BJ (cell line): ENCODE measurements at regions of chr15 and their contacts with region 1.

Region 1: DNA sequence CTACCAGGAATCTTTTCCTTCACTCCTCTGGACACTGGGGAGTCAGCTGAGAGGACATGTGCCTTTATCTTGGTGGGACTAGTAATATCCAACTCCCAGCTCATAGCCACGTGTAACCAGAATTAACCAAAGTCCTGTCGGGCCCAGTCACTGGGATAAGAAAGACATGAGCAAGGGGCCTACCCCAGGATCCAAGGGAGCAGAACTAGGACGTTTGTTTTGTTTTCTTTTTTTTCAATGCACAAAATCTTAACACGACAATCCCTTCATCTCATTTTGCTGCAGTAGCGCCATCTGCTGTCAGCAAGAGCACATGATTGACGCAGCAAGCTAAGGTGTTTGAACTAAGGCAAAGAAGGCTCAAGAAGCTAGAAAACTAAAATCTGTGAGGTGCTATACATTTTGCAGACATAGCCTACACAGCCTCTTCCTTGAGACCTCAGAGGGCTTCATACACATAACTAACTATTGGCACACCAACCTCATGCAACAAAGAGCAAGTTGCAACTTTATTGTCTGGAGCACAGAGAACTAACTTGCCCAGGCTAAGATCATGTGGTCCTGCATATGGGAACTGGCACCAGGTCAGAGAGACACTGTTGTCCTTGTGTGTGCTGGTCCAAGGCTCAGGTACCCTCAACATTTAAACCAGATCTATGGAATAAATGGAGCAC is 43.6 kb downstream of the RLBP1 start:
- DNase-seq: peak; percentile 21
- H3K4me3 ChIP-seq: no peak overlapping the region
- H3K27me3 ChIP-seq: no peaks in the 10 kb centered on the region
- CTCF ChIP-seq: peak; percentile 86

Region 2: GRCh38 chr15:88258093-88258641 is 919.6 kb before region 1 on chr15:
- CTCF ChIA-PET with region 1: no interaction called
- POLR2A ChIA-PET with region 1: no interaction called
- DNase-seq: no peak
- H3K4me3 ChIP-seq: no peak overlapping the region
- H3K27me3 ChIP-seq: peaks cover 42% of the 10 kb centered on the region
- CTCF ChIP-seq: peak; percentile 2; the same call in 1 of the 2 replicates

Region 3: DNA sequence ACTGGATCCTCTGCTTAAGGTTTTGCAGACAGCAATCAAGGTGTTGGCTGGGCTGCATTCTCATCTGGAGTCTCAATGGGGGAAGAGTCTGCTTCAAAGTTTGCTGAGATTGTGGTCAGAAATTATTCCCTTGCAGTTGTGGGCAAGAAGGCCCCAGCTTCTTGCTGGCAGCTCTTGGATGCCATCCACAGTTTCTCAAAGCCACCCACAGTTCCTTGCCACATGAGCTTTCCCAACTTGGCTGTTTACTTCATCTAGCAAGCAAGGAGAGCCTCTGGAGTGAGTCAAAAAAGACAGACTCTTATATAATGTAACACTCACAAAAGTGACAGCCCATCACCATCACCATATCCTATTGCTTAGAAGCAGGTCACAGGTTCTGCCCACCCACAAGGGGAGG is 151.6 kb before region 1 on chr15:
- CTCF ChIA-PET with region 1: interaction called, 12 read pairs
- POLR2A ChIA-PET with region 1: no interaction called
- DNase-seq: no peak
- H3K4me3 ChIP-seq: no peak overlapping the region
- H3K27me3 ChIP-seq: no peaks in the 10 kb centered on the region
- CTCF ChIP-seq: no peak

Region 4: GRCh38 chr15:89068325-89068784 is 109.4 kb before region 1 on chr15:
- CTCF ChIA-PET with region 1: interaction called, 306 read pairs
- POLR2A ChIA-PET with region 1: interaction called, 7 read pairs
- DNase-seq: peak; percentile 79
- H3K4me3 ChIP-seq: no peak overlapping the region
- H3K27me3 ChIP-seq: no peaks in the 10 kb centered on the region
- CTCF ChIP-seq: no peak

Region 5: DNA sequence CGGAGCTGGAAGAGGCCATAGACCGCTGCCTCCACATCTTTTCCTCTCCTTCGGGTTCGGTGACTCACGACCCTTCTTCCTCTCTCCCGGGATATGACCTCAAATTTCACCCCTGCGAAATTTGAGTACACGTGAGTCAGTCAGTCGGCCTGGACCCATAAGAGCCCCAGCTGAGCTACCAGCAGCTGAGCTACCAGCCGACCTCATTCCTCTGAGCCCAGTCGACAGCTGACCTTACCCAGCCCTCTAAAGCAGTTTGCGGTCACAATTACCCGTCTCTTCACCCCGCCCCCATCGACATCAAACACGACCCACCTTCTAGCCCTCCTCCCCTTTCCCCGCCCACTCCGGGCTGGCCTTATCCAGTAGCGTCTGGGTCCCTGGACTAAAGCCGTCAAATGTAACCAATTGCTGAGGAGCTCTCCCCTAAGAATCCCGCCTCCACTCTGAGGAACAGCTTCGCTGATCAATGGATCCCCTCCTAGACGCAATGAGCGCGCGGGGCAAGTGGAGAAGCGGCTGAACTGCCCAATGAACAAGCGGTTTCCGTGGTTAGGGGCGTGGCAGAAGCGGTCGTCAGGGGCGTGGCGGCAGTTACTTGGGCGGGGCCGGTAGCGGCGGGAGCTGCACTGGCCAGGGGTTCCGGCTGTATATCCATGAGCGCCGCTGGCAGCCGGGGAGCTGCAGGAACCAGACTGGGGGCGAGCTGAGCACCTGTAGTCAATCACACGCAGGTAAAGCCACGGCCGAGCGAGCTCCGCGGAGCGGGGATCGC is 89.8 kb before region 1 on chr15 and contains the start of gene ABHD2:
- CTCF ChIA-PET with region 1: interaction called, 10 read pairs
- POLR2A ChIA-PET with region 1: no interaction called
- DNase-seq: peak; percentile 100
- H3K4me3 ChIP-seq: peak within 1 kb of the TSS; percentile 85
- H3K27me3 ChIP-seq: no peaks in the 10 kb centered on the region
- CTCF ChIP-seq: no peak
- polyA plus RNA-seq, gene ABHD2: 47.2 and 69.6 TPM in 2 replicates

Region 6: GRCh38 chr15:89187976-89188514 is 10.3 kb after region 1 on chr15:
- CTCF ChIA-PET with region 1: interaction called, 17 read pairs
- POLR2A ChIA-PET with region 1: no interaction called
- DNase-seq: no peak
- H3K4me3 ChIP-seq: no peak overlapping the region
- H3K27me3 ChIP-seq: no peaks in the 10 kb centered on the region
- CTCF ChIP-seq: no peak